Pancreas (tissue), 10 donors: ENCODE measurements at regions of chr20 and their contacts with region 1.

Region 1: GRCh38 chr20:56540420-56540819 is 7.4 kb downstream of the FAM209B start:
- DNase-seq: no peak
- ATAC-seq: no peak
- H3K4me3 ChIP-seq: no peak overlapping the region
- H3K27ac ChIP-seq: no peak overlapping the region
- H3K4me1 ChIP-seq: no peaks in the 10 kb centered on the region
- H3K27me3 ChIP-seq: no peaks in the 10 kb centered on the region
- CTCF ChIP-seq: no peak

Region 2: DNA sequence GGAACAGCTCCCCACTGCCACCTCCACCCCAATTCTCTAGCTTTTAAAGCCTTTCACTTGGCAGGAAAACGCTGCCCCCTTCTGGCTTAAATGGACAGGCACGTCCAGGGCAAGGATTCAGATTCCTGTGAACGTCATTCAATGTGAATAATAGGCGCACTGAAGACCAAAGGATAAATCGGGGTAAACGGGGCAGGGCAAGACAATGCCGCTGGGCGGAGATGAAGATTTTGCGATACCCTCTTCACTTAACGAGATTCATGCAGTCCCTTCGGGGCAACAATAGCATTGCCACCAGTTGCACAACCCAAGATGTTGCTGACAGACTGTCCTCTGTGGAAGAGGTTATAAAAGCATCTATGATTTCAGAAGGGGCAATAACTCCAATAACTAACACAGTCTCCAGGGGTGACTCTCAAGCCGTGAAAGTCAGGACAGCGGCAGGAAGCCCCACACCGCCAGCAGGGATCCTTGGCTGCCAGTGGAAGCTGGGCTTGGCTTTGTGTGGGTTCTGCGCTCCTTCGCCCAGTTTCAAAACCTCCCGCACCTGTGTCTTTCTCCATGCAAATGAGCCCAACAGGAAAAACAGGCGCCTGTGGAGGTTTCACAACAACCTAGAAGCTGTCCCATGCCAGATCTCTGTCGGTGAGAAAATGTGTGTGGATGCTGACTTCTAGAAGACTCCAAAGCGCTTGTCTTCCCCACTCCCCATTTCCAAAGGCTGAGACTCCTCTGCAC is 434.2 kb after region 1 on chr20:
- intact Hi-C with region 1: loop called in 1 of 3 experiments (anchors 5 kb)
- DNase-seq: peak in 4 of 6 donors; percentile 26 to 63 (median 34)
- ATAC-seq: peak in 3 of 4 donors; percentile 65 to 86 (median 72)
- H3K4me3 ChIP-seq: no peak overlapping the region
- H3K27ac ChIP-seq: no peak overlapping the region
- H3K4me1 ChIP-seq: no peaks in the 10 kb centered on the region
- H3K27me3 ChIP-seq: peaks cover 0 to 7% (median 0%) of the 10 kb centered on the region in 4 donors
- CTCF ChIP-seq: peak; percentile 21 to 47 (median 34)